Posterior cingulate gyrus (tissue), 11 donors: ENCODE measurements at regions of chr5 and their contacts with region 1.

Region 1: GRCh38 chr5:75734913-75735789 is 17.9 kb upstream of the POC5 start:
- DNase-seq: peak in 6 of 10 donors; percentile 53 to 95 (median 55)

Region 2: GRCh38 chr5:76025069-76025468 is 289.9 kb after region 1 on chr5:
- intact Hi-C with region 1: no loop called
- DNase-seq: no peak

Region 3: DNA sequence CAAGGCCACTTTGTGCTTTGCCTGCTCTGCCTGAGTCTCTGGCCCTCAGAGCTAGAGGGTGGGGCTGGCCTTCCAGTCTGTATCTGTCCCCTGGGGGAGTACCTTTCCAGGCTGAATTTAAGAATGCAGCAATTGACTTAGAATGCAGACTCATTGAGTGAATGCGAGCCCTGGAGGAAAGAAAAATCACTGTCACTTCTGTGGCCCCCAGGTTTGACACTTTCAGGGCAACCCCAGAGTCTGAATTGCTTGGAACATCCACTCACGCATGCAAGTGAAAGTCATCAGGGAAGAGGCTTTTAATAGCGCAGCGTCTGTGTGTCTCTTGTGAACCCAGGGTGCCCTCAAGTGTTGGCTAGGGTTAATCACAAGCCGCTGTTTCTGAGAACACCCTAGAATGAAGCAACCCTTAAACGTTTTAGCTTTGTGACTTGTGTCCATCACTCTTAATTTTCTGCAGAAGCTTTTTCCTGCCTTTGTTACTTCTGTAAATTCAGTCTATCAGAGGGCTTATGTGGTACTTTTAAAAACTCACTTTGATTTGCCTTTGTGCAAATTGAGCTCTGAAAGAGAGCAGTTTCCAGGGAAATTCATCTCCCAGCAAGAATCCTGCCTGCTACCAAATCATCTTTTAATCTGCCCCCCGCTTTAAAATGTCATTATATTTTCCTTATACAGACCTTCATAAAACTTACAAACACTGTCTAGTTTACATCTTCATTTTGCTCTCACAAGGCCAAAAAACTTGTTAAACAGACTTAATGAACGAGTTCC is 521.2 kb after region 1 on chr5:
- intact Hi-C with region 1: loop called (anchors 5 kb)
- DNase-seq: peak in 7 of 10 donors; percentile 34 to 92 (median 53)